ENCODE measurements at regions of chr1 and their contacts with region 1.

Region 1: GRCh38 chr1:212879947-212880690 is 22.0 kb downstream of the FLVCR1 start:
- DNase-seq: no peak
- ATAC-seq: no peak
- H3K4me3 Mint-ChIP-seq: no peak overlapping the region
- H3K27ac Mint-ChIP-seq: no peak overlapping the region
- H3K4me1 Mint-ChIP-seq: no peaks in the 10 kb centered on the region
- H3K27me3 Mint-ChIP-seq: no peaks in the 10 kb centered on the region

Region 2: GRCh38 chr1:212132025-212132424 is 748.1 kb before region 1 on chr1:
- CTCF ChIA-PET with region 1: no interaction called
- POLR2A ChIA-PET with region 1: interaction called, 10 read pairs
- intact Hi-C with region 1: no loop called
- DNase-seq: peak; percentile 34
- ATAC-seq: peak; percentile 70
- H3K4me3 Mint-ChIP-seq: no peak overlapping the region
- H3K27ac Mint-ChIP-seq: no peak overlapping the region
- H3K4me1 Mint-ChIP-seq: peaks cover 3% of the 10 kb centered on the region
- H3K27me3 Mint-ChIP-seq: no peaks in the 10 kb centered on the region

Region 3: DNA sequence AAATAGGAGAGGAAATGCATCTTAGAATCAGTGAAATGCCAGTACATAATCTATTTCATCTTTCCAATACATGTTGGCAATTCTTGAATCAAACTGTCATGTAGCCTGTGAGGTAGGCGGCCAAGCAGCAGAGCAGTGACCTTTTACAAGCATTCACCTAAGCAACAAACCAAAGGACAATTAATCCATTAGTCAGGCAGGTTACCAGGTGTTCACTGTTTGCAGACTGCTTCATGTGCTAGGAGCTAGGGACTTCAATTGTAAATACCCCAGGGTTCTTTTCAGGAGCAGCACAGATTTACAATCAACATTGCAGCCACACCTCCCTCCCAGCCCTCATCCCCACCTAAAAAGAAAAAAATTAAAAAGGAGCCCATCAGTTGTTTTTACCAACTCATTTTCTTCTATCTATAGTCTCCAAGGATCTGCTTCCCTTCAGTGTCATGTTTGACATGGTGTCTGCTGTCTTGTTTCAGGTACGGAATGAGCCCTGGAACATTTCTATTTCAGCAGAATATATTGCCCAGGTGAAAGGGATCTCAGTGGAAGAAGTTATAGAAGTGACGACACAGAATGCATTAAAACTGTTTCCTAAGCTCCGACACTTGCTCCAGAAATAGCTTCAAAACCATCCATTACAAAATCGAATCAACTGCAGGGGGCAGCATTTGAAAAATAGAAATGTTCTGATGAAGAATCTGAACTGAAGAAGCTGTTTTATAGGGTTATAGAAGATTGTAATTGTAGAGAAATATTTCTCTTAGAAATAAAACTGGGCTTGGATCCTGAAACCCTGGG is 65.4 kb before region 1 on chr1:
- CTCF ChIA-PET with region 1: no interaction called
- POLR2A ChIA-PET with region 1: no interaction called
- intact Hi-C with region 1: loop called in 1 of 2 experiments (anchors 5 kb)
- DNase-seq: peak; percentile 10
- ATAC-seq: no peak
- H3K4me3 Mint-ChIP-seq: no peak overlapping the region
- H3K27ac Mint-ChIP-seq: no peak overlapping the region
- H3K4me1 Mint-ChIP-seq: peaks cover 3% of the 10 kb centered on the region
- H3K27me3 Mint-ChIP-seq: no peaks in the 10 kb centered on the region

Region 4: DNA sequence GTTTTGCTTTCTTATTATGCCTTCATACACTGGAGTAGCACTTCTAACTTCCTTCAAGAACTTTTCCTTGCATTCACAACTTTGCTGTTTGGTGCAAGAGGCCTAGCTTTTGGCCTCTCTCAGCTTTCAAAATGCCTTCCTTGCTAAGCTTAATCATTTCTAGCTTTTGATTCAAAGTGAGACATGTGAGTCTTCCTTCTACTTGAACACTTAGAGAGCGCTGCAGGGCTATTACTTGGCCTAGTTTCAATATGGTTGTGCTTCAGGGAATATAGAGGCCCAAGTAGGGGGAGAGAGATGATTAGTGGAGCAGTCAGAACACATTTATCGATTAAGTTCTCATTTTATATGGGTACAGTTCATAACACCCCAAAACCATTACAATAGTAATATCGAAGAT is 123.1 kb after region 1 on chr1:
- CTCF ChIA-PET with region 1: no interaction called
- POLR2A ChIA-PET with region 1: no interaction called
- intact Hi-C with region 1: no loop called
- DNase-seq: peak; percentile 47
- ATAC-seq: peak; percentile 98
- H3K4me3 Mint-ChIP-seq: no peak overlapping the region
- H3K27ac Mint-ChIP-seq: peak overlapping the region; percentile 74
- H3K4me1 Mint-ChIP-seq: peaks cover 12% of the 10 kb centered on the region
- H3K27me3 Mint-ChIP-seq: no peaks in the 10 kb centered on the region